ENCODE measurements at regions of chr6 and their contacts with region 1.

Region 1: GRCh38 chr6:116087437-116088027 is 13.1 kb upstream of the NT5DC1 start:
- DNase-seq: no peak
- H3K4me3 ChIP-seq: no peak overlapping the region
- H3K27ac ChIP-seq: no peak overlapping the region
- H3K4me1 ChIP-seq: peaks cover 0 to 2% (median under 1%) of the 10 kb centered on the region in 4 experiments; a peak in 3 of 7 replicates
- H3K27me3 ChIP-seq: no peaks in the 10 kb centered on the region
- CTCF ChIP-seq: no peak
- EP300 ChIP-seq: no peak
- POLR2A ChIP-seq: no peak
- RAD21 ChIP-seq: no peak

Region 2: DNA sequence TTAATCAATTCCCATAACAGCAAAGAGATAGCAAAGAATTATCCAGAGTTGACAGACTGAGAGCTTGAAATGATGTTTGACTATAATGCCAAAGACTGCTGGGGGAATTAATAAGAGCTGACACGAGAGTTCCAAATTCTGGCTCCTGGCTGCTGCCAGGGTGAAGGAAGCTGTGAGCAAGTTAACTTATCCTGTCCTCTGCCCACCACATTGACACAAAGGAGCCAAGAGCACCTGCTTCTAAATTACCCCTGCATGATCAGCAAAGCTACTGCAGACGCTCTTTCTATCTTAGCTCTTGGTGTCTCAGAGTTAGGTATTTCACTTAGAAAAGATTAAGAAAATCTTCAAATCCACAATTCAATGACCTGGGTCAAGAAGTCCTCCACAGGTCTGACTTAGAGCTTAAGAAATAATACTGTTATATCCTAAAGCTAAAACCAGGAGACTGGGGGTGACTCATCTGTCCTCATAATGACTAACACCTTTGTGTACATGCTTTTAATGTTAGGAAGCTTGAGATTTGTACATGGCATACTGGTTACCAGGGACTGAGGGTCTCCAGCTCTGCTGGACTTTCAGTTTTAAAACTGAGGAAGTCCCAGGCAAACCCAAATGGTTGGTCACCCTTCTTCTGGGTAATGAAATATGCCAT is 13.6 kb before region 1 on chr6:
- CTCF ChIA-PET with region 1: interaction called, 11 read pairs
- POLR2A ChIA-PET with region 1: interaction called, 4 read pairs
- DNase-seq: no peak
- H3K4me3 ChIP-seq: no peak overlapping the region
- H3K27ac ChIP-seq: no peak overlapping the region
- H3K4me1 ChIP-seq: no peaks in the 10 kb centered on the region
- H3K27me3 ChIP-seq: peaks cover 0 to 1% (median 0%) of the 10 kb centered on the region in 4 experiments; a peak in 1 of 7 replicates
- CTCF ChIP-seq: no peak
- EP300 ChIP-seq: no peak
- POLR2A ChIP-seq: no peak
- RAD21 ChIP-seq: no peak

Region 3: DNA sequence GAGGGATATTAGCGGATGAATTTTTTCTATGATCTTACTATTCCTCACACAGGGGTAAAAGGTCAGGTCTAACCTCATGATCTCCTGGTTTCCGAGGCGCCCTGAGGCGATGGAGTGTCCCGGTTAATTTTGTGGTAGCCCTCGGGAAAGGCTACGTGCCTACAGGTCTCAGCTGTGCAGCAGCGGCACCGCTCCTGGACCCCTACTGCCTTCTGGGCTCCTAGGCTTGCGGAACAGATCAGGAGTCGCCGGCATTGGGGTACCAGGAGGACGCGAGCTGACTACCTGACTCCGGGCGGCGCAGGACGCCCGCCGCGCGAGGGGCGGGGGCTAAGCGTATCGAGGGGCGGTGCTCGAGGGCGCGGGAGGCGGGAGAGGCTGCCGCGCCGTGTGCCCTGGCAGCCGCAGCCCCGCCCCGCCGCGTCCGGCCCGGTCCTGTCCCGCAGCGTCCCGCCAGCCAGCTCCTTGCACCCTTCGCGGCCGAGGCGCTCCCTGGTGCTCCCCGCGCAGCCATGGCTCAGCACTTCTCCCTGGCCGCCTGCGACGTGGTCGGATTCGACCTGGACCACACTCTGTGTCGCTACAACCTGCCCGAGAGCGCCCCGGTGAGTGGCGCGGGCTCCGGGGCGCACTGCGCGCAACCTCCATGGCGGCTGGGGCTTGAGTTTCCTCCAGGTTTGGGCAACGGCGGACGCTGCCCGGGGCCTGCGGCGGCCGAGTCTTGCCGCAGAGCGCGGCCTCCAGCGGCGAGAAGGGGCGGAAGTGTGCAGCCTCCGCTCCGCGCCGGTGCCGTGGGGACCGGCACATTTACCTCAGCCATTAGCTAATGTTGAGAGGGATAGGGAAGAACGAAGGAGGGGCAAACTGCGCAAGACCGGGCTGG is 13.1 kb after region 1 on chr6 and contains the start of gene NT5DC1:
- CTCF ChIA-PET with region 1: interaction called, 12 read pairs
- POLR2A ChIA-PET with region 1: interaction called, 8 read pairs
- DNase-seq: peak; percentile 71 to 92
- H3K4me3 ChIP-seq: peak within 1 kb of the TSS; percentile 78 to 97 (median 86)
- H3K27ac ChIP-seq: peak within 1 kb of the TSS; percentile 98
- H3K4me1 ChIP-seq: peaks cover 0 to 25% (median 11%) of the 10 kb centered on the region in 4 experiments; a peak in 6 of 7 replicates
- H3K27me3 ChIP-seq: no peaks in the 10 kb centered on the region
- CTCF ChIP-seq: peak in 2 of 3 experiments; percentile 21 to 36; a peak in 3 of 4 replicates
- EP300 ChIP-seq: 0 out of 3 replicates have a peak, but pooled peaks of 1 of the 2 experiments have one; percentile 3
- POLR2A ChIP-seq: peak; percentile 94 to 97
- RAD21 ChIP-seq: no peak; a peak in 1 of 4 replicates
- total RNA-seq, gene NT5DC1: 72.7 and 77.9 TPM in 2 replicates

Region 4: GRCh38 chr6:116229287-116229913 is 141.9 kb after region 1 on chr6:
- CTCF ChIA-PET with region 1: no interaction called
- POLR2A ChIA-PET with region 1: no interaction called
- DNase-seq: peak; percentile 71 to 98
- H3K4me3 ChIP-seq: peak overlapping the region in 1 of 4 experiments; percentile 40; a peak in 3 of 8 replicates
- H3K27ac ChIP-seq: no peak overlapping the region; the same call in 1 of the 2 replicates
- H3K4me1 ChIP-seq: peaks cover 0 to 5% (median 1%) of the 10 kb centered on the region in 4 experiments; a peak in 3 of 7 replicates
- H3K27me3 ChIP-seq: no peaks in the 10 kb centered on the region
- CTCF ChIP-seq: no peak
- EP300 ChIP-seq: no peak
- POLR2A ChIP-seq: peak in 1 of 2 experiments; percentile 58; a peak in 1 of 3 replicates
- RAD21 ChIP-seq: no peak